ENCODE measurements at regions of chr1 and their contacts with region 1.

Region 1: GRCh38 chr1:31182352-31182751 is 57.3 kb downstream of the NKAIN1 start:
- DNase-seq: peak; percentile 89
- H3K4me3 ChIP-seq: 0 out of 2 replicates have a peak overlapping the region, but pooled peaks have one; percentile 10
- H3K27ac ChIP-seq: no peak overlapping the region
- H3K27me3 ChIP-seq: peaks cover 15% of the 10 kb centered on the region
- CTCF ChIP-seq: peak; percentile 67

Region 2: DNA sequence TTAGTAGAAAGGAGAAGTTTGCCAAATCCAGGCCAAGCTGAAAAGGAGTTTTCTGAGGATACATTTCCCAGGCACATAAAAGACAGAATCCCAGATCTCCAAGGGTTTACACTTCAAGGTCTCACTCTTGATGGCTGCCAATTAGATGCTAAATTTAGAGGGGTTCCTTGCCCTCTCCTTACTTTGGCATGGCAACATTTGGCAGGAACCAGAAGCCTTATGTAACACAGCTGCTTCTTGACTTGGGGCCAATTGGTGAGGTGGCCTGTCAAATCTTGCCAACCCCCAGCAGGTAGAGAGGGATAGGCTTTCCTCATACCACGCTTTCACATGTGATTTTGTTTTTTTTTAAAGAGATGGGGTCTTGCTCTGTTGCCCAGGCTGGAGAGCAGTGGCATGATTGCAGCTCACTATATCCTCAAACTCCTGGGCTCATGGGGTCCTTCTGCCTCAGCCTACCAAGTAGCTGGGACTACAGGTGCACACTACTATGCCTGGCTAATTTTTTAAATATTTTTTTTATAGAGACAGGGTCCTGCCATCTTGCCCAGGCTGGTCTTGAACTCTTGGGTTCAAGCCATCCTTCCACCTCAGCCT is 82.5 kb after region 1 on chr1:
- CTCF ChIA-PET with region 1: interaction called, 17 read pairs
- POLR2A ChIA-PET with region 1: interaction called, 3 read pairs
- DNase-seq: no peak
- H3K4me3 ChIP-seq: no peak overlapping the region
- H3K27ac ChIP-seq: no peak overlapping the region
- H3K27me3 ChIP-seq: no peaks in the 10 kb centered on the region
- CTCF ChIP-seq: no peak

Region 3: GRCh38 chr1:31296486-31297276 is 114.3 kb after region 1 on chr1 and contains the starts of genes SNRNP40 and ZCCHC17:
- CTCF ChIA-PET with region 1: interaction called, 13 read pairs
- POLR2A ChIA-PET with region 1: no interaction called
- DNase-seq: peak; percentile 95
- H3K4me3 ChIP-seq: peak within 1 kb of the TSS; percentile 97
- H3K27ac ChIP-seq: peak within 1 kb of the TSS; percentile 86
- H3K27me3 ChIP-seq: no peaks in the 10 kb centered on the region
- CTCF ChIP-seq: no peak
- polyA plus RNA-seq, gene SNRNP40: 53.1 and 54.3 TPM in 2 replicates
- polyA plus RNA-seq, gene ZCCHC17: 57.1 and 72.9 TPM in 2 replicates

Region 4: GRCh38 chr1:31335007-31335406 is 152.7 kb after region 1 on chr1:
- CTCF ChIA-PET with region 1: interaction called, 35 read pairs
- POLR2A ChIA-PET with region 1: no interaction called
- DNase-seq: peak; percentile 2
- H3K4me3 ChIP-seq: no peak overlapping the region
- H3K27ac ChIP-seq: no peak overlapping the region
- H3K27me3 ChIP-seq: no peaks in the 10 kb centered on the region
- CTCF ChIP-seq: peak; percentile 63

Region 5: GRCh38 chr1:31348449-31348848 is 166.1 kb after region 1 on chr1:
- CTCF ChIA-PET with region 1: interaction called, 10 read pairs
- POLR2A ChIA-PET with region 1: no interaction called
- DNase-seq: no peak
- H3K4me3 ChIP-seq: no peak overlapping the region
- H3K27ac ChIP-seq: no peak overlapping the region
- H3K27me3 ChIP-seq: no peaks in the 10 kb centered on the region
- CTCF ChIP-seq: no peak

Region 6: GRCh38 chr1:31422505-31423319 is 240.4 kb after region 1 on chr1:
- CTCF ChIA-PET with region 1: interaction called, 17 read pairs
- POLR2A ChIA-PET with region 1: no interaction called
- DNase-seq: peak; percentile 55
- H3K4me3 ChIP-seq: no peak overlapping the region
- H3K27ac ChIP-seq: peak overlapping the region; percentile 87
- H3K27me3 ChIP-seq: no peaks in the 10 kb centered on the region
- CTCF ChIP-seq: peak; percentile 99

Measured in AG04450 (cell line).